Prostate gland (tissue), 2 donors: ENCODE measurements at regions of chr3 and their contacts with region 1.

Region 1: GRCh38 chr3:49120438-49121131 is at the start of gene USP19:
- DNase-seq: peak; percentile 94
- H3K4me3 ChIP-seq: peak within 1 kb of the TSS; percentile 92 to 100
- H3K27ac ChIP-seq: peak within 1 kb of the TSS; percentile 91 to 95
- H3K4me1 ChIP-seq: peaks cover 6% of the 10 kb centered on the region
- H3K27me3 ChIP-seq: no peaks in the 10 kb centered on the region
- CTCF ChIP-seq: no peak
- POLR2A ChIP-seq: peak; percentile 61
- total RNA-seq, gene USP19: 62.7 to 98.2 TPM

Region 2: GRCh38 chr3:49104483-49105291 is 15.9 kb before region 1 on chr3 and contains the start of gene QARS1:
- intact Hi-C with region 1: loop called (anchors 2 kb)
- DNase-seq: peak; percentile 95
- H3K4me3 ChIP-seq: peak within 1 kb of the TSS; percentile 95 to 97
- H3K27ac ChIP-seq: peak within 1 kb of the TSS; percentile 81 to 82
- H3K4me1 ChIP-seq: peaks cover 11% of the 10 kb centered on the region
- H3K27me3 ChIP-seq: no peaks in the 10 kb centered on the region
- CTCF ChIP-seq: peak in 1 of 4 experiments; percentile 8
- POLR2A ChIP-seq: no peak
- total RNA-seq, gene QARS1: 254 to 315 TPM